Mammary epithelial cell (primary cell): ENCODE measurements at regions of chr1 and their contacts with region 1.

Region 1: DNA sequence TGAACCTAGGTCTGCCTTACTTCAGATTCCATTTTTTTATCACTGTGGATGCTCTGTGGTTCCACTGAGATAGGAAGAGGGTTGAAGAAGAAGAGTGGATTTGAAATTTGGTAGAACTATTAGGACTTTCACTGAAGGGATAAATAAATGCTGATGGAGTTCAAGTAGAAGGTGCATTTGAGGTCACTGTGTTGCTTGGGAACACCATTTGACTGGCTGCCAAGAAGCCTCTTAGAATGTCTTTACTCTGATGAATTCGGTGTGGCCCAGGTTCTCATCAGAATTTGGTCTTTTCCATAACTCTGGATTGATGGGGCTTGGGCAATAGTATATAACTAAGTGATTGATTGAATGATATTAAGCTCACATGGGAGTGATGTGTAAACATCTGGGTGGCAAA is 11.9 kb downstream of the XPR1 start:
- DNase-seq: no peak
- H3K4me3 ChIP-seq: no peak overlapping the region
- H3K27ac ChIP-seq: no peak overlapping the region
- H3K4me1 ChIP-seq: peaks cover 7% of the 10 kb centered on the region
- H3K27me3 ChIP-seq: no peaks in the 10 kb centered on the region
- CTCF ChIP-seq: no peak

Region 2: GRCh38 chr1:180552626-180553025 is 91.1 kb before region 1 on chr1:
- CTCF ChIA-PET with region 1: no interaction called
- dilution Hi-C with region 1: no loop called
- in situ Hi-C with region 1: no loop called
- intact Hi-C with region 1: no loop called
- DNase-seq: no peak
- H3K4me3 ChIP-seq: no peak overlapping the region
- H3K27ac ChIP-seq: no peak overlapping the region
- H3K4me1 ChIP-seq: no peaks in the 10 kb centered on the region
- H3K27me3 ChIP-seq: no peaks in the 10 kb centered on the region
- CTCF ChIP-seq: no peak

Region 3: GRCh38 chr1:180623579-180624347 is 19.9 kb before region 1 on chr1:
- CTCF ChIA-PET with region 1: no interaction called
- dilution Hi-C with region 1: no loop called
- in situ Hi-C with region 1: no loop called
- intact Hi-C with region 1: no loop called
- DNase-seq: no peak
- H3K4me3 ChIP-seq: no peak overlapping the region
- H3K27ac ChIP-seq: no peak overlapping the region
- H3K4me1 ChIP-seq: no peaks in the 10 kb centered on the region
- H3K27me3 ChIP-seq: no peaks in the 10 kb centered on the region
- CTCF ChIP-seq: peak in 1 of 2 donors; percentile 23

Region 4: DNA sequence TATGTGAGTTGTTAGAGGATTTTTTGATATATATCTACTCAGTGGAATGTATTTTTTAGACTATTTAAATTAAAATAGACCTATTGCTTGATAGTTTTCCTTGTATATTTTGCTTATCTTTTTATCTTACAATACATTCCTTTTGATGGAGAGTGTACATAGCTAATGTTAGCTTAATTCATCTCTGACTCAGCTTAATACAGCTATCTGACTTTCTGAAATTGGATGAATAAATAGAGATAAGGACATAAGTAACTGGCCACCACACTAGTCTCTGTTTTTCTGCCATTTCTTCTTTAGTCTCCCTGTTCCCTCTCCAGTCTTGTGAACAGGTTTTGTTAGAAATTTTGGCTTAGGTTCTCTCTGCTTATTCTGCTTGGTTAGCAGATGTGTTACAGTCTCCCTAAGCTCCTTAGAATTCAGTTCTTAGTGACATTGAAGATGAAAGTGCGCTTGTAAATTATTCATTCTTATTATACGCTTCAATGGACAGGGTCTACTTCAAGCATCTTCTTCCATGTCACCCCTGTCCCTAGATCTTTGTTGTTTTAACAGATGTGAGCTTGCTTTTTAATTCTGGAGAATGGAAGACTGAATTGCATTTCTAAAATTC is 47.7 kb after region 1 on chr1:
- CTCF ChIA-PET with region 1: no interaction called
- dilution Hi-C with region 1: no loop called
- in situ Hi-C with region 1: no loop called
- intact Hi-C with region 1: no loop called
- DNase-seq: no peak
- H3K4me3 ChIP-seq: no peak overlapping the region
- H3K27ac ChIP-seq: no peak overlapping the region
- H3K4me1 ChIP-seq: no peaks in the 10 kb centered on the region
- H3K27me3 ChIP-seq: no peaks in the 10 kb centered on the region
- CTCF ChIP-seq: no peak

Region 5: DNA sequence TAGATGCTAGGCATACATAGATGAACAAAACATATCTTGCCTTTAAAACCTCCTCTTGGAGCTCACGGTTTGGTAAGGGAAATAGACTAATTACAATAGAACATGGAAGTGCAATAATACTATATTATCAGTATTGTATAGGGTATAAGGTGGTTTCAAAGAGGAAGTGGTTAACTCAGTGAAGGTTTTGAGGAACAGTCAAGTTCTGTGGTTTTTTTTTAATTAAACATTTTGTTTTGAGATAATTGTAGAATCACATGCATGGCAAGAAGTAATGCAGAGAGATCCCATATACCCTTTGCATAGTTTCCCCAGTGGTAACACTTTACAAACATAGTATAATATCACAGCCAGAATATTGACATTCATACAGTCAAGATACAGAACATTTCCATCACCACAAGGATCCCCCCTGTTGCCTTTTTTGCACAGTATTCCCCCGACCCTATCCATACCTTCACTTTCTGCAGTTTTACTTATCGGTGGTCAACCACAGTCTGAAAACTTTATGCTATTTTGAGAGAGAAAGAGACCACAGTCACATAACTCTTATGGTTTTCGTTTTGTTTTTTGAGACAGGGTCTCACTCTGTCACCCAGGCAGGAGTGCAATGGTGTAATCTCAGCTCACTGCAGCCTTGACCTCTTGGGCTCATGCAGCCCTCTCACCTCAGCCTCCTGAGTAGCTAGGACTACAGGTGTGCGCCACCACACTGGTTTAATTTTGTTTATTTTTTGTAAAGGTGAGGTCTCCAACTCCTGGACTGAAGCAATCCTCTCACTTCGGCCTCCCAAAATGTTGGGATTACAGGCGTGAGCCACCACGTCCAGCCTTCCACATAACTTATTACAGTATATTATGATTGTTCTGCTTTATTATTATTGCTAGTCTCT is 208.5 kb after region 1 on chr1:
- CTCF ChIA-PET with region 1: no interaction called
- dilution Hi-C with region 1: no loop called
- in situ Hi-C with region 1: loop called (anchors 10 to 25 kb)
- intact Hi-C with region 1: no loop called
- DNase-seq: no peak
- H3K4me3 ChIP-seq: no peak overlapping the region
- H3K27ac ChIP-seq: no peak overlapping the region
- H3K4me1 ChIP-seq: peaks cover 12% of the 10 kb centered on the region
- H3K27me3 ChIP-seq: no peaks in the 10 kb centered on the region
- CTCF ChIP-seq: no peak